Activated CD4-positive, alpha-beta T cell treated with anti-CD3 and anti-CD28 coated beads, Interleukin-2, amount 10 ng/mL, durations not matched to agents 24 days and 14 days (primary cell): ENCODE measurements at regions of chr4 and their contacts with region 1.

Region 1: DNA sequence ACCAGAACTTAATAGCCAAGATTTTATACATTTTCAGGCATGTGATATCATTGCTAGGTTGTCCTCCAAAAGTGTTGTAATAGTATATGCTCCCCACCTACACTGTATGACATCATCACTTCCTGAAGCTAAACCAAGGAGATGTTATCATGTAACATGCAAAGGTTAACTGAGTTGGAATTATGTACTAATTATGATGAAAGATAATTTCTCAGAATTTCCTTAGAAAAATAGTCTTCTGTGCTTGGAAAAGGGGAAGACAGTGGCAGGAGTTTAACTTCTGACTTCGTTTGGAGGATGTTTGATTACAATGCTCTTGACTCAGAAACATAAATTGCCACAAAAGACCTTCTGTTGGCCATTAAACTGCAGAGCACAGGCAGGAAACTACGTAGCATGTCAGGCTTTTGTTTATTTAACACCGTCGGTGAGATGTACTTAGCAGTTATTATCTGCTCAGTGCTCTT is 83.6 kb upstream of the GUCY1A1 start:
- DNase-seq: peak; percentile 67
- H3K4me3 Mint-ChIP-seq: peak overlapping the region; percentile 19
- H3K27ac Mint-ChIP-seq: peak overlapping the region; percentile 60
- H3K4me1 Mint-ChIP-seq: peaks cover 11% of the 10 kb centered on the region
- H3K27me3 Mint-ChIP-seq: no peaks in the 10 kb centered on the region

Region 2: GRCh38 chr4:155249016-155249566 is 333.9 kb before region 1 on chr4:
- intact Hi-C with region 1: no loop called
- DNase-seq: no peak
- H3K4me3 Mint-ChIP-seq: no peak overlapping the region
- H3K27ac Mint-ChIP-seq: no peak overlapping the region
- H3K4me1 Mint-ChIP-seq: no peaks in the 10 kb centered on the region
- H3K27me3 Mint-ChIP-seq: no peaks in the 10 kb centered on the region

Region 3: DNA sequence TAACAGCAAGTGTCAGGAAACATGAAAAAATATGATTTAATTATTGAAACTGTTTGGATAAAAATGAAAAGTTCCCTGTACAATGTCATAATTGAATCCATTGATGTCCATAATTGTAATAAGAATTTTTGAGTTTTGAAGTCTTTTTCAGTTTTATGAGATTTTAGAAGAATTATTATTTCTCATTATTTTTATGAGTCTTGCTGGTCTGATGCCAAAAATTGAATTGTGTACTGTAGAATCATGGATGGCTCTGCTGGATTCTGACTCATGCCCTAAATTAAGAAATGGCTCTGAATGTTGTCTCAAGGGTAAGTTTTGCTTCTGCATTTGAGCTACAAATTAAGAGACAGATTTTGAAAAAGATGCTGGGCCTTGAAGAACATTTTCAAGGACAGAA is 73.4 kb before region 1 on chr4:
- intact Hi-C with region 1: no loop called
- DNase-seq: no peak
- H3K4me3 Mint-ChIP-seq: no peak overlapping the region
- H3K27ac Mint-ChIP-seq: no peak overlapping the region
- H3K4me1 Mint-ChIP-seq: peaks cover 4% of the 10 kb centered on the region
- H3K27me3 Mint-ChIP-seq: no peaks in the 10 kb centered on the region

Region 4: DNA sequence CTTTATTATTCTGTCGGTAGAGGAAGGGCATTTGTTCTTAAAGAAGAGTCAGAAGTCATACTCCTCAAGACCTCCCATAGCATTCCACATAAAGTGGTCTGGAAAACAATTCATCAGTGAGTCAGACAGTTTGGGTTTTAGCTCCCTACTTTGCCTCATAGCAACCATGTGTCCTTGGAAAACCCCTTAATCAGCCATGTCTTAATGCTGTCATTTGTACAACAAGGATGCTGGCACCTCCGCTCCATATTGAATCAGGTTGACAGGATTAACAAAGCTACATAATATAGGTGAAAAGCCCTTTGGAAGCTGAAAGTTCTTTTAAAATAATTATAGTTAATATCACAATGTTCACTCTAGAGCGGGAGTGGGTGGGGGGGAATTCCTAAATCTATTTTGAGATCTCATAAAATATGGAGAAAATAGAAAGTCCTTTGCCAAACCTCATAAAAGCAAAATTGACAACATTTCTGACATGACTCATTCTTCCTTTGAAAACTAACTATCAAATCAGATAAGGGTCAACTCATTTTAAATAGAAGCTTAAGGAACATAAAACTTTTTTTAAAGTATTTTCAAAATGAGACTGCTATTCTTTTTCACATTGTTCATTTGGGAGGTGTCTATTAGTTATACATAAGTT is 46.3 kb after region 1 on chr4:
- intact Hi-C with region 1: loop called (anchors 2 kb)
- DNase-seq: no peak
- H3K4me3 Mint-ChIP-seq: peak overlapping the region; percentile 1
- H3K27ac Mint-ChIP-seq: peak overlapping the region; percentile 56
- H3K4me1 Mint-ChIP-seq: peaks cover 17% of the 10 kb centered on the region
- H3K27me3 Mint-ChIP-seq: no peaks in the 10 kb centered on the region

Region 5: GRCh38 chr4:155854597-155855226 is 271.7 kb after region 1 on chr4:
- intact Hi-C with region 1: no loop called
- DNase-seq: no peak
- H3K4me3 Mint-ChIP-seq: no peak overlapping the region
- H3K27ac Mint-ChIP-seq: no peak overlapping the region
- H3K4me1 Mint-ChIP-seq: no peaks in the 10 kb centered on the region
- H3K27me3 Mint-ChIP-seq: no peaks in the 10 kb centered on the region